ENCODE measurements at regions of chr6 and their contacts with region 1.

Region 1: DNA sequence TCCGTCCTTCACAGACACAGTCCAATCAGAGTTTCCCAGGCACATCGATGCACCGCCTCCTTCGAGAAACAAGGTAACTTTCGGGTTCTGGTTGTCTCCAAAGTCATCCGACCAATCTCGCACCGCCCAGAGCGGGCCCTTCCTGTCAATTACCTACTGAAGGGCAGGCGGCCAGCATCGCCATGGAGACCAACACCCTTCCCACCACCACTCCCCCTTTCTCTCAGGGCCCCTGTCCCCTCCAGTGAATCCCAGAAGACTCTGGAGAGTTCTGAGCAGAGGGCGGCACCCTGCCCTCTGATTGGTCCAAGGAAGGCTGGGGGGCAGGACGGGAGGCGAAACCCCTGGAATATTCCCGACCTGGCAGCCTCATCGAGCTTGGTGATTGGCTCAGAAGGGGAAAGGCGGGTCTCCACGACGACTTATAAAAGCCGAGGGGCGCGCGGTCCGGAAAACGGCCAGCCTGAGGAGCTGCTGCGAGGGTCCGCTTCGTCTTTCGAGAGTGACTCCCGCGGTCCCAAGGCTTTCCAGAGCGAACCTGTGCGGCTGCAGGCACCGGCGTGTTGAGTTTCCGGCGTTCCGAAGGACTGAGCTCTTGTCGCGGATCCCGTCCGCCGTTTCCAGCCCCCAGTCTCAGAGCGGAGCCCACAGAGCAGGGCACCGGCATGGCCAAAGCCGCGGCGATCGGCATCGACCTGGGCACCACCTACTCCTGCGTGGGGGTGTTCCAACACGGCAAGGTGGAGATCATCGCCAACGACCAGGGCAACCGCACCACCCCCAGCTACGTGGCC is at the start of gene HSPA1B:
- DNase-seq: peak; percentile 56 to 91 (median 85)
- ATAC-seq: peak; percentile 63
- H3K4me3 ChIP-seq: peak within 1 kb of the TSS; percentile 60 to 95
- H3K4me3 Mint-ChIP-seq: peak within 1 kb of the TSS; percentile 96
- H3K27ac ChIP-seq: peak within 1 kb of the TSS; percentile 66 to 72
- H3K27ac Mint-ChIP-seq: peak within 1 kb of the TSS; percentile 94
- H3K4me1 ChIP-seq: peaks cover 25% of the 10 kb centered on the region
- H3K4me1 Mint-ChIP-seq: peaks cover 38% of the 10 kb centered on the region
- H3K27me3 ChIP-seq: no peaks in the 10 kb centered on the region
- H3K27me3 Mint-ChIP-seq: no peaks in the 10 kb centered on the region
- CTCF ChIP-seq: no peak
- total RNA-seq, gene HSPA1B: 4.9 to 5.2 TPM

Region 2: DNA sequence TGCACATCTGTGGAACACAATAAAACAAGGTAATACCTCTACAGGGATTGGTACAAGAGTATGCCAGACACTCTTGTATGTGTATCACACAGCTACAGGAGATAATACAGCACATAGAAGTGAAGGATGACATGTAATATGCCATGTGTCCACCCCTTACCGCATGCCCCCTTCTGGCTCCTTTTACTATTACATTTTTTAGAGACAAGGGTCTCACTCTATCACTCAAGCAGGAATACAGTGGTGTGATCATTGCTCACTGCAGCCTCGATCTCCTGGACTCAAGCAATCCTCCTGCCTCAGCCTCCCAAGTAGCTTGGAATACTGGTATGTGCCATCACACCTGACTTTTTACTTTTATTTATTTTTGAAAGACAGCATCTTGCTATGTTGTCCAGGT is 230.5 kb before region 1 on chr6:
- CTCF ChIA-PET with region 1: interaction called, 6 read pairs
- POLR2A ChIA-PET with region 1: no interaction called
- intact Hi-C with region 1: loop called in 1 of 2 experiments (anchors 1 kb)
- DNase-seq: peak in 5 of 9 experiments; percentile 47 to 86 (median 56)
- ATAC-seq: peak; percentile 83
- H3K4me3 ChIP-seq: no peak overlapping the region
- H3K4me3 Mint-ChIP-seq: peak overlapping the region; percentile 3
- H3K27ac ChIP-seq: no peak overlapping the region
- H3K27ac Mint-ChIP-seq: peak overlapping the region; percentile 79
- H3K4me1 ChIP-seq: peaks cover 53% of the 10 kb centered on the region
- H3K4me1 Mint-ChIP-seq: peaks cover 50% of the 10 kb centered on the region
- H3K27me3 ChIP-seq: no peaks in the 10 kb centered on the region
- H3K27me3 Mint-ChIP-seq: no peaks in the 10 kb centered on the region
- CTCF ChIP-seq: peak; percentile 66

Region 3: GRCh38 chr6:31680840-31681671 is 146.4 kb before region 1 on chr6 and contains the start of gene LY6G5C:
- CTCF ChIA-PET with region 1: interaction called, 12 read pairs
- POLR2A ChIA-PET with region 1: interaction called, 3 read pairs
- intact Hi-C with region 1: loop called (anchors 1 kb)
- DNase-seq: peak; percentile 29 to 80 (median 60)
- ATAC-seq: peak; percentile 75
- H3K4me3 ChIP-seq: peak within 1 kb of the TSS; percentile 71 to 73
- H3K4me3 Mint-ChIP-seq: peak within 1 kb of the TSS; percentile 89
- H3K27ac ChIP-seq: peak within 1 kb of the TSS in 1 of 2 experiments; percentile 60
- H3K27ac Mint-ChIP-seq: peak within 1 kb of the TSS; percentile 72
- H3K4me1 ChIP-seq: peaks cover 12% of the 10 kb centered on the region
- H3K4me1 Mint-ChIP-seq: peaks cover 16% of the 10 kb centered on the region
- H3K27me3 ChIP-seq: no peaks in the 10 kb centered on the region
- H3K27me3 Mint-ChIP-seq: no peaks in the 10 kb centered on the region
- CTCF ChIP-seq: no peak
- total RNA-seq, gene LY6G5C: 1.5 to 1.9 TPM

Region 4: DNA sequence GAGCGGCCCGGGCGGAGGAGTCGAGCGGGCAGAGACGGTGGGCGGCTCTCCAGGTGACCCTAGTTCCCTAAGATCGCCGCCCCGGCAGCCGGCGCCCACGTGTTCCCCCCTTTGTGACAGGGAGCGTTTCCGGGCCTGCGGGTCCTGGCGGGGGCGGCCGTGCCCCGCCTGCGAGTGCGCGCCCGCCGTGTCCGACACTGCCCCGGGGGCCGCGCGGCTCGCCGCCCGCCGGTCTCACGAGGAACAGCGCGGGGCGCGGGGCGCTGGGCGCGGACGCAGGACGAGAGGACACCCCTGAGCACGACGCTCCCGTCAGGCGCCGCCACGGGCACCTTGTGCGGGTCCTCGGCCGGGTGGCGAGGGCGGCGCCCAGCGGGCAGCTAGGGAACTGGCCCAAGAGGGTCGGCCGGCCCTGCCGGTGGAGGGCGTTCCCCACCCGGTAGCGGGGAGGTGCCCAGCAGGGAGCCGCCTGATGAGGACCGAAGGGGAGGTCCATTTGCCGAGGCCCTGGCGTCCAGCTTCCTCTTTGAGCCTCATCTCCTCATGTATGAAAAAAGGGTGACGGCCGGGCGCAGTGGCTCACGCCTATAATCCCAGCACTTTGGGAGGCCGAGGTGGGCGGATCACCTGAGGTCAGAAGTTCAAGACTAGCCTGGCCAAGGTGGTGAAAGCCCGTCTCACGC is 31.7 kb before region 1 on chr6 and contains the start of gene VARS1:
- CTCF ChIA-PET with region 1: interaction called, 5 read pairs
- POLR2A ChIA-PET with region 1: interaction called, 5 read pairs
- intact Hi-C with region 1: loop called in 1 of 2 experiments (anchors 1 kb)
- DNase-seq: peak; percentile 68 to 93 (median 83)
- ATAC-seq: peak; percentile 88
- H3K4me3 ChIP-seq: peak within 1 kb of the TSS; percentile 63 to 93
- H3K4me3 Mint-ChIP-seq: peak within 1 kb of the TSS; percentile 94
- H3K27ac ChIP-seq: peak within 1 kb of the TSS; percentile 74 to 83
- H3K27ac Mint-ChIP-seq: peak within 1 kb of the TSS; percentile 98
- H3K4me1 ChIP-seq: peaks cover 44% of the 10 kb centered on the region
- H3K4me1 Mint-ChIP-seq: peaks cover 44% of the 10 kb centered on the region
- H3K27me3 ChIP-seq: no peaks in the 10 kb centered on the region
- H3K27me3 Mint-ChIP-seq: no peaks in the 10 kb centered on the region
- CTCF ChIP-seq: peak; percentile 70
- total RNA-seq, gene VARS1: 29.8 to 33.3 TPM

Region 5: DNA sequence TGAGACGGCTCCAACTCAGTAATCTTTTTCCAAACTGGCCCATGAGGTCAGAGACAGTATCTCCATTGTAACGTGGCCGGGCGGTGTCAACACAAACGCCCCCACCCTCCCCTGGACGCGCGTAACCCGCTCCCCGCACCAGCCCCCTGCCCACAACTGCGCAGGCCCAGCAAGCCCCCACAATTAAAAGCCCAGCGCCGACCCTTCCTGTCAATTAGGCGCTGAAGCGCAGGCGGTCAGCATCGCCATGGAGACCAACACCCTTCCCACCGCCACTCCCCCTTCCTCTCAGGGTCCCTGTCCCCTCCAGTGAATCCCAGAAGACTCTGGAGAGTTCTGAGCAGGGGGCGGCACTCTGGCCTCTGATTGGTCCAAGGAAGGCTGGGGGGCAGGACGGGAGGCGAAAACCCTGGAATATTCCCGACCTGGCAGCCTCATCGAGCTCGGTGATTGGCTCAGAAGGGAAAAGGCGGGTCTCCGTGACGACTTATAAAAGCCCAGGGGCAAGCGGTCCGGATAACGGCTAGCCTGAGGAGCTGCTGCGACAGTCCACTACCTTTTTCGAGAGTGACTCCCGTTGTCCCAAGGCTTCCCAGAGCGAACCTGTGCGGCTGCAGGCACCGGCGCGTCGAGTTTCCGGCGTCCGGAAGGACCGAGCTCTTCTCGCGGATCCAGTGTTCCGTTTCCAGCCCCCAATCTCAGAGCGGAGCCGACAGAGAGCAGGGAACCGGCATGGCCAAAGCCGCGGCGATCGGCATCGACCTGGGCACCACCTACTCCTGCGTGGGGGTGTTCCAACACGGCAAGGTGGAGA is 12.3 kb before region 1 on chr6 and contains the starts of genes HSPA1A and HSPA1L:
- CTCF ChIA-PET with region 1: interaction called, 10 read pairs
- POLR2A ChIA-PET with region 1: interaction called, 17 read pairs
- intact Hi-C with region 1: no loop called
- DNase-seq: peak in 7 of 9 experiments; percentile 41 to 75 (median 63)
- ATAC-seq: peak; percentile 13
- H3K4me3 ChIP-seq: peak within 1 kb of the TSS; percentile 74 to 96
- H3K4me3 Mint-ChIP-seq: peak within 1 kb of the TSS; percentile 93
- H3K27ac ChIP-seq: peak within 1 kb of the TSS; percentile 58 to 82
- H3K27ac Mint-ChIP-seq: peak within 1 kb of the TSS; percentile 83
- H3K4me1 ChIP-seq: peaks cover 16% of the 10 kb centered on the region
- H3K4me1 Mint-ChIP-seq: peaks cover 36% of the 10 kb centered on the region
- H3K27me3 ChIP-seq: no peaks in the 10 kb centered on the region
- H3K27me3 Mint-ChIP-seq: no peaks in the 10 kb centered on the region
- CTCF ChIP-seq: no peak
- total RNA-seq, gene HSPA1A: 2.1 to 2.2 TPM
- total RNA-seq, gene HSPA1L: 1.2 TPM

Region 6: DNA sequence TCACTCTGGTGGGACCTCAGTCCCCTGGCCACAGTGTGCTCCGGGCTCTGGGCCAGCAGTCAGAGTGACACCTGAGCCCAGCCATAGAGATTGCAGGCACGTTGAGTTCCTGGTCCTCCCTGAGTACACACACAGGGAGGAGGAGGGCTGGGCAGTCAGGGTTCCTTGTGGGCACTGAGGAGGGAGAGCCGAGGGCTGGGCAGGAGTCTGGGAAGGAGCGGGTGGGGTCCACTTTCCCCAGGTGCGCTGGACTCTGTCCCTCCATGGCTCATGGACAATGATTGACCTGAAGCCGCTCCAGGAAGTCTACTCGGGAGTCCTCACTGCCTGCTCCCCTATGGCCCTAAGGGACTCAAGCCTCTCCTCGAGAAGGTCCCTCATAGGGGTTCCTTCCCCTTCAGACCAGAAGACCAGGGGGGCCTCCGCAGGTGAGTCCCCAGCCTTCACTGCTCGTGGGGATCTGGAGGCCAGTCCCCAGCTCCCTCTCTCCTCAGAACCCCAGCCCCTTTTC is 50.2 kb after region 1 on chr6:
- CTCF ChIA-PET with region 1: no interaction called
- POLR2A ChIA-PET with region 1: no interaction called
- intact Hi-C with region 1: no loop called
- DNase-seq: no peak
- ATAC-seq: no peak
- H3K4me3 ChIP-seq: no peak overlapping the region
- H3K4me3 Mint-ChIP-seq: no peak overlapping the region
- H3K27ac ChIP-seq: no peak overlapping the region
- H3K27ac Mint-ChIP-seq: no peak overlapping the region
- H3K4me1 ChIP-seq: no peaks in the 10 kb centered on the region
- H3K4me1 Mint-ChIP-seq: no peaks in the 10 kb centered on the region
- H3K27me3 ChIP-seq: no peaks in the 10 kb centered on the region
- H3K27me3 Mint-ChIP-seq: no peaks in the 10 kb centered on the region
- CTCF ChIP-seq: no peak

Measured in CD8-positive, alpha-beta T cell (primary cell).